ENCODE measurements at regions of chr11 and their contacts with region 1.

Region 1: GRCh38 chr11:2532704-2533586 is 88.1 kb downstream of the KCNQ1 start:
- DNase-seq: peak; percentile 72 to 95 (median 87)
- ATAC-seq: peak; percentile 83 to 91 (median 86)
- H3K4me3 ChIP-seq: peak overlapping the region in 1 of 2 donors; percentile 29
- H3K4me3 Mint-ChIP-seq: peak overlapping the region; percentile 68 to 80 (median 68)
- H3K27ac ChIP-seq: no peak overlapping the region
- H3K27ac Mint-ChIP-seq: no peak overlapping the region
- H3K4me1 ChIP-seq: peaks cover 8 to 24% of the 10 kb centered on the region in 2 experiments
- H3K4me1 Mint-ChIP-seq: peaks cover 24 to 26% (median 24%) of the 10 kb centered on the region in 3 donors
- H3K27me3 ChIP-seq: peaks cover 0 to 30% of the 10 kb centered on the region in 2 experiments
- H3K27me3 Mint-ChIP-seq: no peaks in the 10 kb centered on the region

Region 2: DNA sequence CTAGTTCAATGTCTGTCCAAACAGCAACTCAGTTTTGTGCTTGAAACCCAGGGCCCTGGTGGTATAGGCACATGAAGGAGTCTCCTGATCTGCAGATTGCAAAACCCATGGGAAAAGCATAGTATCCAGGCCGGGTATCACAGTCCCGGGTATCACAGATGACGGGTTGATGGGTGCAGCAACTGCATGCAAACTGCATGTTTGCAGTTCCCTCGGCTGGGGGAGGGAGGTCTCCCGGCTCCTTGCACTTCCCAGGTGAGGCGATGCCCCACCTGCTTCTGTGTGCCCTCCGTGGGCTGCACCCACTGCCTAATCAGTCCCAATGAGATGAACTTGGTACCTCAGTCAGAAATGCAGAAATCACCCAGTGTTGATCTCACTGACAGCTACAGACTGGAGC is 34.2 kb before region 1 on chr11:
- CTCF ChIA-PET with region 1: no interaction called
- POLR2A ChIA-PET with region 1: no interaction called
- DNase-seq: no peak
- ATAC-seq: no peak
- H3K4me3 ChIP-seq: no peak overlapping the region
- H3K4me3 Mint-ChIP-seq: no peak overlapping the region
- H3K27ac ChIP-seq: no peak overlapping the region
- H3K27ac Mint-ChIP-seq: no peak overlapping the region
- H3K4me1 ChIP-seq: no peaks in the 10 kb centered on the region
- H3K4me1 Mint-ChIP-seq: peaks cover 1 to 17% (median 2%) of the 10 kb centered on the region in 3 donors
- H3K27me3 ChIP-seq: peaks cover 0 to 10% of the 10 kb centered on the region in 2 experiments
- H3K27me3 Mint-ChIP-seq: no peaks in the 10 kb centered on the region

Region 3: GRCh38 chr11:2885676-2886081 is 352.7 kb after region 1 on chr11 and contains the start of gene CDKN1C:
- CTCF ChIA-PET with region 1: interaction called, 8 to 32 read pairs
- POLR2A ChIA-PET with region 1: no interaction called
- DNase-seq: peak; percentile 64 to 92 (median 79)
- ATAC-seq: peak; percentile 88 to 90 (median 89)
- H3K4me3 ChIP-seq: peak within 1 kb of the TSS; percentile 61 to 78
- H3K4me3 Mint-ChIP-seq: peak within 1 kb of the TSS; percentile 85 to 92 (median 85)
- H3K27ac ChIP-seq: no peak within 1 kb of the TSS
- H3K27ac Mint-ChIP-seq: peak within 1 kb of the TSS; percentile 65 to 75
- H3K4me1 ChIP-seq: peaks cover 0 to 47% of the 10 kb centered on the region in 2 experiments
- H3K4me1 Mint-ChIP-seq: peaks cover 17 to 27% (median 24%) of the 10 kb centered on the region in 3 donors
- H3K27me3 ChIP-seq: peaks cover 0 to 35% of the 10 kb centered on the region in 2 experiments
- H3K27me3 Mint-ChIP-seq: peaks cover 0 to 7% of the 10 kb centered on the region in 2 donors
- total RNA-seq, gene CDKN1C: 2.1 to 7.0 (median 5.3) TPM

Region 4: GRCh38 chr11:2892215-2893020 is 359.5 kb after region 1 on chr11:
- CTCF ChIA-PET with region 1: interaction called, 16 to 32 read pairs
- POLR2A ChIA-PET with region 1: no interaction called
- DNase-seq: peak in 34 of 35 experiments; percentile 18 to 79 (median 52)
- ATAC-seq: peak; percentile 58 to 65 (median 65)
- H3K4me3 ChIP-seq: peak overlapping the region; percentile 55
- H3K4me3 Mint-ChIP-seq: peak overlapping the region; percentile 58 to 81 (median 74)
- H3K27ac ChIP-seq: peak overlapping the region; percentile 65
- H3K27ac Mint-ChIP-seq: peak overlapping the region; percentile 88 to 91
- H3K4me1 ChIP-seq: peaks cover 13 to 46% of the 10 kb centered on the region in 2 experiments
- H3K4me1 Mint-ChIP-seq: peaks cover 28 to 37% (median 29%) of the 10 kb centered on the region in 3 donors
- H3K27me3 ChIP-seq: no peaks in the 10 kb centered on the region
- H3K27me3 Mint-ChIP-seq: no peaks in the 10 kb centered on the region

Region 5: GRCh38 chr11:2930704-2931428 is 397.9 kb after region 1 on chr11:
- CTCF ChIA-PET with region 1: interaction called, 8 to 10 read pairs
- POLR2A ChIA-PET with region 1: no interaction called
- DNase-seq: peak in 5 of 35 experiments; percentile 33 to 57 (median 46)
- ATAC-seq: peak in 2 of 4 experiments; percentile 26 to 36
- H3K4me3 ChIP-seq: peak overlapping the region; percentile 53 to 62
- H3K4me3 Mint-ChIP-seq: peak overlapping the region; percentile 70 to 80 (median 77)
- H3K27ac ChIP-seq: no peak overlapping the region
- H3K27ac Mint-ChIP-seq: peak overlapping the region; percentile 3 to 78
- H3K4me1 ChIP-seq: peaks cover 8 to 46% of the 10 kb centered on the region in 2 experiments
- H3K4me1 Mint-ChIP-seq: peaks cover 20 to 34% (median 25%) of the 10 kb centered on the region in 3 donors
- H3K27me3 ChIP-seq: peaks cover 0 to 55% of the 10 kb centered on the region in 2 experiments
- H3K27me3 Mint-ChIP-seq: peaks cover 7 to 20% of the 10 kb centered on the region in 2 donors

Region 6: DNA sequence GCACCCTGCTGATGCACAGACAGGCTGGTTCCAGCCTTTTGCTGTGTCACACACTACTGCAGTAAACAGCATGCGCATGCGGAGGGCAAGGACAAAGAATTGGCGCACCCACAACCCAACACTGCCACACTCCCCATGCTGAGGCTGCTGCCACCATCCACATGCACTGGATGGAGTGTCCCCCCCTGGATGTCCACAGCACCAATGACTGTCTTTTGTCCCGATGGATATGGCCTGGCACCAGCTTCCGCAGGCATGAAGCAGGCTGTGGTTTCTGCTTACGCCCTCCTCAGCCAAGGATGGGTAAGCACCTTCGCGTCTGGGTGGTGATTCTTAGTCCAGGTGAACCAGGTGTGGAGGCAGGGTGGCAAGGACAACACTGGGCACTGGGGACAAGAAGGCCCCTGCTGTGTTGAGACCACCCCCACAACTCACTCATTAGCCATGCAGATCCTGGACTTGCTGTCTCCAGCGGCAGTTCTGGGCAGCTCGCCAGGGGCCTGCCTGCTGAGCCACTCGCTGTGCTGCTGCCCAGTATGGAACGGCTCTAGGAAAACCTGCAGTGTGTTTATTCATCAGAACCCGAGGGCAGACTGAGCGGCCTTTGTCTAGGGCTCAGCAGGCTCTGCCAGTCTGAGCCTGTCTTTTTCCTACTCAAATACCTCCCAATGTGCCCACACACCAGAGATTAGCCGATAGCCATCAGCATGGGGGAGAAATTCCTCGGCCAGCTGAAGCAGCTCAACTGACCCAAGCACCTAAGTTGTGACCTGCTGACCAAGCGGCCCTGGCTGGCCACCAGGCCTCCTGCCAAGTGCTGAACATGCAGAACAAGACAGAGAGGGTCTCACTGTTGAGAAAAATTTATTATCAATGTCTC is 467.4 kb after region 1 on chr11:
- CTCF ChIA-PET with region 1: no interaction called
- POLR2A ChIA-PET with region 1: no interaction called
- DNase-seq: peak in 1 of 35 experiments; percentile 20
- ATAC-seq: no peak
- H3K4me3 ChIP-seq: no peak overlapping the region
- H3K4me3 Mint-ChIP-seq: no peak overlapping the region
- H3K27ac ChIP-seq: no peak overlapping the region
- H3K27ac Mint-ChIP-seq: no peak overlapping the region
- H3K4me1 ChIP-seq: no peaks in the 10 kb centered on the region
- H3K4me1 Mint-ChIP-seq: peaks cover 0 to 9% (median 1%) of the 10 kb centered on the region in 3 donors
- H3K27me3 ChIP-seq: no peaks in the 10 kb centered on the region
- H3K27me3 Mint-ChIP-seq: no peaks in the 10 kb centered on the region

Region 7: DNA sequence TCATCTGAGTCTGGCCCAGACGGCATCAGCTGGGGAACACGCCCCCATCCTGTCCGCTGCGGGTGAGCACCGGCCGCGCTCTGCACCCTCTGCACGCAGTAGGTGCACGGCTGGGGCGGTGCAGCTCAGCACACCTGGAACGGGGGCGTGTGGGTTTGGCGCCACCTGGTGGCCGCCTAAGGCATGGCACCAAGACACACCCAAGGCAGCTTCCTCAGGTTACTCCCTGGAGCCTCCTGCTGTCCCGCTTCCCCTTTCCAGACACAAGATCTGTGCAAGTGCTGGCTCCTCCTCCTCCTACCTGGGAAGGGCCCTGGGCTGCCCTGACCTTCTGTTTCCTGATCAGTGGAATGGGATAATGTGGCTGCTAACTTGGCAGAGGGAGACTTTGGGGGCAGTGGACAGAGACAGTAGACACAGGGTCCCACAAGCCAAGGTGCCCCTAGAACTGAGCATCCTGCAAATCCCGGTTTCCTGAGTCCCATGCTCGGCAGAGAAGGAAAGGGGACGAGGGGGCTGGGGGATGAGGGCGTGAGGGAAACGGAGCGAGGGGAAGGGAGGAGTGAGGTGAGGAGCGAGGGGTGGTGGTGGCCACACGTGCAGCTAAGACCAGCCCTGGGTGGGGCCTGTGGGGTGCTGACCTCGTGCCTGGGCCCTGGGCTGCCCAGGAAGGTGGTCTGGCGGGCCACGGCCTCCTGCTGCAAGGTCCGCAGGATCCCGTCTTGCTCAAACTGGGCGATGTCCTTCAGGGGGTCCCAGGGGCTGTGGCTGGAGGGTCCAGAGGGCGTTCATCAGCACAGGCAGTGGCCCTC is 559.1 kb after region 1 on chr11:
- CTCF ChIA-PET with region 1: interaction called, 7 to 17 read pairs
- POLR2A ChIA-PET with region 1: no interaction called
- DNase-seq: peak; percentile 22 to 84 (median 58)
- ATAC-seq: peak; percentile 80 to 90 (median 86)
- H3K4me3 ChIP-seq: no peak overlapping the region
- H3K4me3 Mint-ChIP-seq: no peak overlapping the region
- H3K27ac ChIP-seq: no peak overlapping the region
- H3K27ac Mint-ChIP-seq: no peak overlapping the region
- H3K4me1 ChIP-seq: peaks cover 0 to 7% of the 10 kb centered on the region in 2 experiments
- H3K4me1 Mint-ChIP-seq: peaks cover 0 to 1% (median 0%) of the 10 kb centered on the region in 3 donors
- H3K27me3 ChIP-seq: peaks cover 0 to 34% of the 10 kb centered on the region in 2 experiments
- H3K27me3 Mint-ChIP-seq: peaks cover 0 to 3% of the 10 kb centered on the region in 2 donors

Measured in T-cell (primary cell).